ENCODE measurements at regions of chr7 and their contacts with region 1.

Region 1: GRCh38 chr7:116211006-116211912 is 920 bp downstream of the TES start:
- DNase-seq: peak; percentile 86 to 91
- ATAC-seq: peak; percentile 94
- H3K4me3 ChIP-seq: peak overlapping the region; percentile 90 to 98
- H3K27ac ChIP-seq: peak overlapping the region; percentile 83 to 97
- H3K4me1 ChIP-seq: peaks cover 0 to 6% of the 10 kb centered on the region in 2 donors
- H3K27me3 ChIP-seq: no peaks in the 10 kb centered on the region

Region 2: DNA sequence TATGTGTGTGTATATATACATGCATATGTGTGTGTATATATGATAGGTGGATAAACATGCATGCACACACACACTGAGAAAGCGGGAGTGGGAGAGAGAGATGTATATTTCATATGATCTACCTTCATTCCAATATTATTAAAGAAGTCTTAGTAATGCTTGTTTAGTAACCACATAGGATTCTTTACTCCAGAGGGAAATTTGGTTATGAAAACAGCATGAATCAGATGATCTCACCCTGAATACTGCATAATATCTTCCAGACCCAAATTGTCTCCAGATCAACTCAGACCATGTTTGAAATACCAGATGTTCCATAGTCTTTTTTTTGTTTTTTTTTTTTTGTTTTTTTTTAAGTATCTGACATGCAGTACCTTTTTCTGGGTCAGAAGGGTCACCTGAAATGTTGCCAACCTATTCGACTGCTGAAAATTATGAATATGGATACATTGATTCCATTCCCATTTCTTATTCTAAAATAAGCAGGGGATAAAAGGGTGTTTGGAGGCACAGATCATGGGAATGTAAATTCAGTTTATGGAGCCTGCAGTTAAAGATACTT is 16.5 kb after region 1 on chr7:
- intact Hi-C with region 1: loop called in 1 of 2 experiments (anchors 2 kb)
- DNase-seq: no peak
- ATAC-seq: peak; percentile 69
- H3K4me3 ChIP-seq: peak overlapping the region in 1 of 2 donors; percentile 64
- H3K27ac ChIP-seq: peak overlapping the region in 1 of 2 donors; percentile 43
- H3K4me1 ChIP-seq: peaks cover 5 to 22% of the 10 kb centered on the region in 2 donors
- H3K27me3 ChIP-seq: no peaks in the 10 kb centered on the region